Astrocyte of the cerebellum (primary cell): ENCODE measurements at regions of chr11 and their contacts with region 1.

Region 1: GRCh38 chr11:72015511-72016171 is 16.9 kb downstream of the IL18BP start:
- DNase-seq: no peak
- H3K4me3 ChIP-seq: no peak overlapping the region
- CTCF ChIP-seq: peak; percentile 67

Region 2: GRCh38 chr11:71934213-71934612 is 81.4 kb before region 1 on chr11:
- in situ Hi-C with region 1: no loop called
- DNase-seq: no peak
- H3K4me3 ChIP-seq: no peak overlapping the region
- CTCF ChIP-seq: no peak

Region 3: DNA sequence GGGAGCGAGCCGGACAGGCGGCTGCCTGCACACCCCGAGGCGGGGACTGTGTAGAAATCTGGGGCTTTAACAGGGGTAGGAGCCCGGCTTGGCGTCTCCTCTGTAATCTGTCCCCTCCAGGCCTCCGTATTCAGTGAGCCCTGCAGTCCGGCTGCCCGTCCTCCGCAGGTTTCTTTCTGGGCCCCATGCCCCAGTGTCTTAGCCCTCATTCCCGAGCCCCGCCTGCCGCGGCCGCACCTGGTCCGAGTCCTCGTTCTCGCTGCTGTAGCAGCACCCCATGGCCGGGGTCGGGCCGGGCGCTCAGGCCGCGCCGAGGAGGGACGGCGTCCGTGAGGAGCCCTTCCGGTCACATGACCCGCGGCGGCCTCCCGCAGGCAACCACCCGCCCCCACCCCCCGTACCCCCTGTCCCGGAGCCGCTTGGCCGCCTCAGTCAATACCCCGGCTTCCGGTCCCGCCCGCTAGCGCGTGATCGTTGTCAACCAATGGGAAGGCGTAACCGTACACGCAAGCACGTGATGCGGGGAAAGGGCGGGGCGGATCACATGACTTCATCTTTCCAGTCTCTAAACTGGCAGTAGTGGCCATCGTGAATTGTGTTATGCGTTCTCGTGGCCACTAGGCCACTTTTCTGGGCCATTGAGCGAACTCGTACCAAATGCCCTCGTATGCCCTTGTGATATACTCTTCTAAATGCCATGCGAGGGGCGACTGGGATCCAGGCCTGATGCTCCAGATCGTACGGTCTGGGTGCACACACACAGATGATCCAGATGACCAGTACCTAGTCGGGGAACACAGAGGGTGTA is 87.5 kb after region 1 on chr11 and contains the start of gene LAMTOR1:
- in situ Hi-C with region 1: loop called (anchors 25 kb)
- DNase-seq: peak; percentile 97
- H3K4me3 ChIP-seq: peak within 1 kb of the TSS; percentile 84
- CTCF ChIP-seq: peak; percentile 44

Region 4: DNA sequence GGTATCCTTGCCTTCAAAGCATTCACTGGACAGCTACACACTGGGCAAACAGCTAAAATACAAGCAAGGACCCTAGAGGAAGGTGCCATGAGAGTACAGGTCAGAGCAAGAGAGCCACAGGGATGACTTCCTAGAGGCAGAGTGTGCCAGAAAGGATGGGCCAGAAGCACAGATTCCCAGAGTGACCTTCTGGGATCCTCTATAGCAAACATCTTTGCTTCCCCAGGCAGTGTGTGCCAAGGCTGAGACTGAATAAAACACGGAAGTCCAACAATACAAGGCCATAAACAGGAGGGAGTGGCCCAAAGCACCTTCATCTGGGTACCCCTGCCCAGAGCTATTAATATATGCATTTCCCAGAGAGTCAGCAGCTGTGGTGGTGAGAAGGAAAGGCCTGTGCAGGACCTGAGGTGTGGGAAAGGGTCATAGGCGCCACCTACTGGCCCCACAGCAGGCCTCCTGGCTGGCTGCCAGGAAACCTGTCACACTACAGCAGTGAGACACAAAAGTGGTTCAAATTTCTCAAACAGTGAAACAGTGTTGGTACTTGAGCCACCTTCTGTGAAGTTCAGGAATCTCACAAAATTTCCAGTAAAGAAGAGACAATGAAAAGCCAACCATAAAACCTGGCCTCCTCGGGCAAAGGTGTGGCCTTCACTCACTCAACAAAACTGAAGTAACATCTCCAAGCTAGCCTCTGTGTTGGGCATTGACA is 398.4 kb after region 1 on chr11:
- in situ Hi-C with region 1: loop called (anchors 25 kb)
- DNase-seq: peak; percentile 47
- H3K4me3 ChIP-seq: no peak overlapping the region
- CTCF ChIP-seq: peak; percentile 77